ENCODE measurements at regions of chr3 and their contacts with region 1.

Region 1: GRCh38 chr3:67113802-67114407 is 115.8 kb downstream of the KBTBD8 start:
- DNase-seq: peak; percentile 91
- H3K4me3 Mint-ChIP-seq: no peak overlapping the region
- H3K27ac Mint-ChIP-seq: no peak overlapping the region
- H3K4me1 Mint-ChIP-seq: no peaks in the 10 kb centered on the region
- H3K27me3 Mint-ChIP-seq: peaks cover 13% of the 10 kb centered on the region
- CTCF ChIP-seq: peak; percentile 92

Region 2: GRCh38 chr3:67127254-67127653 is 13.3 kb after region 1 on chr3:
- CTCF ChIA-PET with region 1: interaction called, 14 read pairs
- POLR2A ChIA-PET with region 1: no interaction called
- intact Hi-C with region 1: no loop called
- DNase-seq: no peak
- H3K4me3 Mint-ChIP-seq: no peak overlapping the region
- H3K27ac Mint-ChIP-seq: no peak overlapping the region
- H3K4me1 Mint-ChIP-seq: no peaks in the 10 kb centered on the region
- H3K27me3 Mint-ChIP-seq: no peaks in the 10 kb centered on the region
- CTCF ChIP-seq: no peak

Region 3: DNA sequence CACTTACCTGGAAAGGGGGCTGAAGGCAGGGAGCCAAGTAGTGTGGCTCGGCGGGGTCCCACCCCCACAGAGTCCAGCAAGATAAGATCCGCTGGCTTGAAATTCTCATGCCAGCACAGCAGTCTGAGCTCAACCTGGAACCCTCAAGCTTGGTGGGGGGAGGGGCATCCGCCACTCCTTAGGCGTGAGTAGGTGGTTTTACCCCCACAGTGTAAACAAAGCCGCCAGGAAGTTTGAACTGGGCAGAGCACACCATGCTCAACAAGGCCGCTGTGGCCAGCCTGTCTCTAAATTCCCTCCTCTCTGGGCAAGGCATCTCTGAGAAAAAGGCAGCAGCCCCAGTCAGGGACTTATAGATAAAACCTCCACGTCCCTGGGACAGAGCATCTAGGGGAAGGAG is 40.5 kb after region 1 on chr3:
- CTCF ChIA-PET with region 1: no interaction called
- POLR2A ChIA-PET with region 1: no interaction called
- intact Hi-C with region 1: no loop called
- DNase-seq: no peak
- H3K4me3 Mint-ChIP-seq: no peak overlapping the region
- H3K27ac Mint-ChIP-seq: no peak overlapping the region
- H3K4me1 Mint-ChIP-seq: no peaks in the 10 kb centered on the region
- H3K27me3 Mint-ChIP-seq: no peaks in the 10 kb centered on the region
- CTCF ChIP-seq: no peak

Region 4: DNA sequence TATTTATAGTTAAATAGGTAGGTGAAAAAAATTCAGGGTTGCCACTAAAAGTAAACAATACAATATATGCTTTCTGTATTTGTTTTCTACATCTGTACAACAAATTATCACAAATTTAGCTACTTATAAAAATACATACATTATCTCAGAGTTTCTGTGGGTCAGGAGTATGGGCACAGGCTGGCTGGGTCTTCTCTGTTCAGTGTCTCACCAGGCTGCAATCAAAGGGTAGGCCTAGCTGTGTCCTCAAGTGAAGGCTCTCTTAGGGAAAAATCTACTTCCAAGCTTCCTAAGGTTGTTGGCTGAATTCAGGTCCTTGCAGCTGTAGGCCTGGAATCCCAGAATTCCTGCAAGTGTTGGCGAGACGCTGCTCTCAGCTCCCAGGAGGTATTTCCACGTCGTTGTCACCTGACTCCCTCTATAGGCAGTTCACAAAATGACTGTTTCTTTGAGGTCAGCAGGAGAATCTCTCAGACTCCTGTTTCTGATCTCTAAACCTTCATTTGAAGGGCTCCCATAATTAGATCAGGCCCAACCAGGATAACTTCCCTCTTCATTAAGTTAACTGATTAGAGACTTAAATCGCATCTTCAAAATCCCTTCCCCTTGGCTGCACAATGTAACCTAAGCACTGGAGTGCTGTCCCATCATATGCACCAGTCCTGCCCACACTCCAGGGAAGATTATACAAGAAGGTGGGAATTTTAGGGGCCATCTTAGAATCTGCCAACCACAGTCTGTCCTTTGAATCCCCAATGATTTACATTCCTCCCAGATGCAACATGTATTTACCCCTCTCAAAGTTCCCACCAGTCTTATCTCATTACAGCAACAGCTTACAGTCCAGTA is 243.9 kb after region 1 on chr3:
- CTCF ChIA-PET with region 1: interaction called, 11 read pairs
- POLR2A ChIA-PET with region 1: no interaction called
- intact Hi-C with region 1: loop called (anchors 5 kb)
- DNase-seq: peak; percentile 60
- H3K4me3 Mint-ChIP-seq: no peak overlapping the region
- H3K27ac Mint-ChIP-seq: peak overlapping the region; percentile 68
- H3K4me1 Mint-ChIP-seq: no peaks in the 10 kb centered on the region
- H3K27me3 Mint-ChIP-seq: no peaks in the 10 kb centered on the region
- CTCF ChIP-seq: peak; percentile 30

Region 5: DNA sequence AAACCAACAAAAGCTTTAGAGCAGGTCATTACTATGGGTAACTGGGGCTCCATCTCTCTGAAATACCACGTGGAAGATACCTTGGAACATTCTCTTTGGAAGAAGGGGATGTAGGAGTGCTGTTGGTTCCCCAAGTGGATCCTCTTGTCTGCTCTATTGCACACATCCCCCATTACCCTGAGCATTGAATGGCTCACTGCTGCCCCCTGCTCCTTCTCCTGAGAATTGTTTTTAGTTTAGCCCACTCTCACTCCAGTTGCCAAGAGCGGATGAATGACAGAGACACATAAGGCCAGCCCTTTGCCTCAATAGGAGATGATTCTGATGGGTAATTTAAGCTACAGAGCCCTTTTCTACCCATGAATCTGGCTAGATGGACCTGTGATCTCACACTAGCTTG is 676.1 kb after region 1 on chr3:
- CTCF ChIA-PET with region 1: interaction called, 4 read pairs
- POLR2A ChIA-PET with region 1: no interaction called
- intact Hi-C with region 1: loop called (anchors 1 kb)
- DNase-seq: peak; percentile 70
- H3K4me3 Mint-ChIP-seq: no peak overlapping the region
- H3K27ac Mint-ChIP-seq: no peak overlapping the region
- H3K4me1 Mint-ChIP-seq: no peaks in the 10 kb centered on the region
- H3K27me3 Mint-ChIP-seq: peaks cover 55% of the 10 kb centered on the region
- CTCF ChIP-seq: peak; percentile 41

Region 6: GRCh38 chr3:68876112-68876713 is 1762.3 kb after region 1 on chr3:
- CTCF ChIA-PET with region 1: interaction called, 17 read pairs
- POLR2A ChIA-PET with region 1: no interaction called
- intact Hi-C with region 1: loop called (anchors 2 kb)
- DNase-seq: peak; percentile 74
- H3K4me3 Mint-ChIP-seq: no peak overlapping the region
- H3K27ac Mint-ChIP-seq: no peak overlapping the region
- H3K4me1 Mint-ChIP-seq: no peaks in the 10 kb centered on the region
- H3K27me3 Mint-ChIP-seq: peaks cover 76% of the 10 kb centered on the region
- CTCF ChIP-seq: peak; percentile 77

Region 7: DNA sequence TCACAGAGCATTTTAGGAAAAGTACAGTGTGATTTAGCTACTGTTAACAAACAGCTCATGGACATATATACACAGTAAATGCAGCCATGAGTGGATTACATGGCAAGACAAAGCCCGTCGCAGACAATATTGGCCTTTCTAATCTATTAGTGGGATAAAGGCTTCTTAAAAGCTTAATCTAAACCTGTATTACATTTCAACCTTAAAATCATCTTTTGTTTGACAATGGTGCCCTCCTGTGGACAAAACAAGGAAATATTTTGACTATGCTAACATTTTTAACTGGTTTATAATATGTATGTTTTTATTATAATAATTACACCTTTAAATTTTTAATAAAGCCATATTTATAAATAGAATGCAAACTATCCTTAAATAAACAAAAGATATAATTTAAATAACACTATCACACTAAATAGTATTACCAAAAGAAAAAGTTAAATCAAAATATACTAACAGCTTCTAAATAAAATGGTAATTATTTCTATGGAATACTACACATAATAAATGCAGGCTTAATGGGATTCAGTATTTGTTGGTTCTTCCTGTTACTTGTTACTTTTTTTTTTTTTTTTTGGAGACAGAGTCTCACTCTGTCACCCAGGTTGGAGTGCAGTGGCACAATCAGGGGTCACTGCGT is 1779.8 kb after region 1 on chr3:
- CTCF ChIA-PET with region 1: interaction called, 13 read pairs
- POLR2A ChIA-PET with region 1: no interaction called
- intact Hi-C with region 1: no loop called
- DNase-seq: peak; percentile 42
- H3K4me3 Mint-ChIP-seq: no peak overlapping the region
- H3K27ac Mint-ChIP-seq: no peak overlapping the region
- H3K4me1 Mint-ChIP-seq: no peaks in the 10 kb centered on the region
- H3K27me3 Mint-ChIP-seq: peaks cover 71% of the 10 kb centered on the region
- CTCF ChIP-seq: peak; percentile 27